ENCODE measurements at regions of chr1 and their contacts with region 1.

Region 1: DNA sequence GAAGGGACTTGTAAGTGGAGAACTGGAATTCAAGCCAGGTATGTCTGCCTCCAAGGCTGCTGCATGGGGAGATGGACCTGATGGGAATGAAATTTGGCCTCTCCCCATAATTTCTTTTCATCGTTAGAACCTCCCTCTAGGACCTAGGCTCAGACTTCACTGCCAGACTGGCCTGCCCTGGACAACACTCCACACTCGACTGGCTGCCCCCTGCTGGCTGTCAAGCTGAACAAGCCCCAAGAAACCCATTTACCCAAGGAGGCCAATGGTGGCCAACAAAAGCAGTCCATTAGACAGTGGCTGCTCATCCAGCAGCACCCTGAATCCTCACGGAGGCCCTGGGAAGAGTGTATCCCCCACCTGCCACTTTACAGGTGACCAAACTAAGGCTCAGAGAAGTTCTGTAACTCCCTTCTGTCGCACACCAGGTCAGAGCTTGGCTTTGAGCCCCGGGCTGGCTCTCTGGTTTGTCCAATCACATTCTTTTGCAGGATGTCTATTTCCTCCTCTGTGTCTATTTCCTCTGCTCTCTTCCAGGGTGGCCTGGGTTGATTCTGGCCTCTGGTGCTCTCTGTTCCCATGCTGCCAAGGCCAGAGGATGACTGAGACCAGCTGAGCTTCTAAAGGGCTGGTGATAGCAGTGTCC is 3.8 kb downstream of the RNF186 start:
- DNase-seq: no peak
- ATAC-seq: no peak
- H3K4me3 Mint-ChIP-seq: no peak overlapping the region
- H3K27ac Mint-ChIP-seq: no peak overlapping the region
- H3K4me1 Mint-ChIP-seq: no peaks in the 10 kb centered on the region
- H3K27me3 Mint-ChIP-seq: peaks cover 14% of the 10 kb centered on the region
- CTCF ChIP-seq: no peak

Region 2: GRCh38 chr1:19661721-19662228 is 149.6 kb before region 1 on chr1:
- CTCF ChIA-PET with region 1: no interaction called
- POLR2A ChIA-PET with region 1: no interaction called
- intact Hi-C with region 1: loop called (anchors 5 kb)
- DNase-seq: no peak
- ATAC-seq: no peak
- H3K4me3 Mint-ChIP-seq: no peak overlapping the region
- H3K27ac Mint-ChIP-seq: no peak overlapping the region
- H3K4me1 Mint-ChIP-seq: peaks cover 25% of the 10 kb centered on the region
- H3K27me3 Mint-ChIP-seq: peaks cover 37% of the 10 kb centered on the region
- CTCF ChIP-seq: peak; percentile 97

Region 3: DNA sequence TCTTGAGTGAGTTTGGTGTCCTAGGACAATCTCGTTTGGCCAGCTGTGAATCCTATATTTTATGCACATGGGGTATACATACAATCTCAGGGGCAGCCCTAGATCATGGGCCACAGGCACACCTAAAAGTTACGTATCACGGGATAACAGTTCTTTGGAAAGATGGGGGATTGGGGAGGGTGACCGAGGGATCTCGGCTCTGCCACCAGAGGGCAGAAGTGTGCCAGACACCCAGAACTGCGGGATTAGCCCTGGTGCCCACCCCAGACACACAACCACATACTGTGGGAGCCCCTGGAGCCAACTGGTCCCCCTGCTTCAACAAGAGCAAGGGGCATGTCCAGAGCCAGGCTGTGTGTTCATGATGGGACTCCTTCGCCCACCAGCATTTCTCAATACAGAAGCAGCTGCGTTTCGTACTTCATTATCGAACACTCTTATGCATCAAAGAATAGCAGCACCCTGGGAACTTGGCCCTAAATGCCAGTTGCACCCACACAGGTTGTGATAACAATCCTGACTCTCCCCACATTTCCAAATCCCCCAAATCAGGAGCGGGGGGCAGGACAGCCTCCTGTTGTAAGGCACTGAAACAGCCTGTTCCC is 49.1 kb before region 1 on chr1:
- CTCF ChIA-PET with region 1: no interaction called
- POLR2A ChIA-PET with region 1: no interaction called
- intact Hi-C with region 1: loop called (anchors 2 kb)
- DNase-seq: no peak
- ATAC-seq: no peak
- H3K4me3 Mint-ChIP-seq: no peak overlapping the region
- H3K27ac Mint-ChIP-seq: no peak overlapping the region
- H3K4me1 Mint-ChIP-seq: peaks cover 6% of the 10 kb centered on the region
- H3K27me3 Mint-ChIP-seq: no peaks in the 10 kb centered on the region
- CTCF ChIP-seq: no peak

Region 4: GRCh38 chr1:19844731-19845495 is 33.6 kb after region 1 on chr1:
- CTCF ChIA-PET with region 1: no interaction called
- POLR2A ChIA-PET with region 1: no interaction called
- intact Hi-C with region 1: no loop called
- DNase-seq: no peak
- ATAC-seq: no peak
- H3K4me3 Mint-ChIP-seq: no peak overlapping the region
- H3K27ac Mint-ChIP-seq: no peak overlapping the region
- H3K4me1 Mint-ChIP-seq: no peaks in the 10 kb centered on the region
- H3K27me3 Mint-ChIP-seq: peaks cover 25% of the 10 kb centered on the region
- CTCF ChIP-seq: no peak

Region 5: DNA sequence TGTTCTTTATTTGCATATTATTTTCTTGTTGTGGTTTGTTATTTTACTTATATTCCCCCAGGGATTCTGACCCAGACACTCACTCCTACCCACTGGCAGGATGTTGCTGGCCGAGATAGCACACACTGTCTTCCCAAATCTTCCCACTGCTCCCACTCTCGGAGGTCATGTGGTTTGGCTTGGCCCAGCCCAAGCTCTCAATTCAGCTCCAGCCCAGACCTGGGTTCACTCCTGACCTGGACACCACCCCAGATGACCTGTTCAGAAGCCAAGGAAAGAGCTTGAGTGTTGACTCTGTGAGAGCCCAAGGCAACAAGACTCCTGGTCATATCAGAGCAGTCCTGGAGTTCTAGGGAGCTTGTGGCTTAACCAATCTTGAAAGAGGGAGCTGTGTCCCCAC is 739.9 kb after region 1 on chr1:
- CTCF ChIA-PET with region 1: no interaction called
- POLR2A ChIA-PET with region 1: no interaction called
- intact Hi-C with region 1: no loop called
- DNase-seq: no peak
- ATAC-seq: no peak
- H3K4me3 Mint-ChIP-seq: no peak overlapping the region
- H3K27ac Mint-ChIP-seq: no peak overlapping the region
- H3K4me1 Mint-ChIP-seq: peaks cover 8% of the 10 kb centered on the region
- H3K27me3 Mint-ChIP-seq: peaks cover 36% of the 10 kb centered on the region
- CTCF ChIP-seq: no peak

Region 6: GRCh38 chr1:21165646-21166045 is 1354.3 kb after region 1 on chr1:
- CTCF ChIA-PET with region 1: no interaction called
- POLR2A ChIA-PET with region 1: no interaction called
- intact Hi-C with region 1: no loop called
- DNase-seq: no peak
- ATAC-seq: peak; percentile 75
- H3K4me3 Mint-ChIP-seq: peak overlapping the region; percentile 17
- H3K27ac Mint-ChIP-seq: peak overlapping the region; percentile 92
- H3K4me1 Mint-ChIP-seq: peaks cover 26% of the 10 kb centered on the region
- H3K27me3 Mint-ChIP-seq: no peaks in the 10 kb centered on the region
- CTCF ChIP-seq: no peak